PC-3 (cell line): ENCODE measurements at regions of chr3 and their contacts with region 1.

Region 1: DNA sequence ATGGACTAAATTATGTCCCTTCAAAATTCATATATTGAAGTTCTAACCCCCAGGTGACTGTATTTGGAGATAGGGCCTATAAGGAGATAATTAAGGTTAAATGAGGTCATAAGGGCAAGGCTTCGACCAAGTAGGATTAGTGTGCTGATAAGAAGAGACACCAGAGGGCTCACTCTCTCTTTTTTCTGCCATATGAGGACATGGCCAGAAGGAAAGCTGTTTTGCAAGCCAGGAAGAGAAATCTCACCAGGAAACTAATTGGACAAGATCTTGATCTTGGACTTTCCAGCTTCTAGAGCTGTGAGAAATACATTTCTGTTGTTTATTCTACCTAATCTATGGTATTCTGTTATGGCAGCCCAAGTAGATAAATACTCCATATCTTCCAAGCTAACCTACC is 503.6 kb upstream of the NAALADL2 start:
- DNase-seq: peak; percentile 48
- ATAC-seq: peak; percentile 81
- H3K4me3 ChIP-seq: no peak overlapping the region
- H3K27ac ChIP-seq: no peak overlapping the region
- H3K4me1 ChIP-seq: no peaks in the 10 kb centered on the region
- H3K27me3 ChIP-seq: no peaks in the 10 kb centered on the region
- CTCF ChIP-seq: peak; percentile 65

Region 2: DNA sequence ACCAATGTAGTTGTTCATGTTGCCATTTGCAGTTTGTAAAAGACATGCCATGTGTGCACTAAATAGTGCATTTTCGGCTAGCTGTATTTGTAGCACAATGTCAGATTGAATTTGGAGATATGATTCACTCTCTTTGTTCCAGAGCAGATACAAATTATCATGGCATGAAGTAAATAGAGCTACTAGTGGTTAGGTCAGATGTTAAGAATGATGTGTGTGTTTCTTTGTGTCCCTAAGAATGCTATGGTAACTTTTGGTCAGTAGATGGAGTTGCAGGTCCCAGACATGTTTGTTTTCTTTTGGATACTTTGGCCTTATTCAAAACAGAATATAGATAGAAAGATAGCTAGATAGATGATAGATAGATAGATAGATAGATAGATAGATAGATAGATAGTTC is 362.2 kb before region 1 on chr3:
- CTCF ChIA-PET with region 1: no interaction called
- POLR2A ChIA-PET with region 1: no interaction called
- intact Hi-C with region 1: loop called (anchors 10 kb)
- DNase-seq: peak; percentile 45
- ATAC-seq: peak; percentile 85
- H3K4me3 ChIP-seq: no peak overlapping the region
- H3K27ac ChIP-seq: no peak overlapping the region
- H3K4me1 ChIP-seq: no peaks in the 10 kb centered on the region
- H3K27me3 ChIP-seq: no peaks in the 10 kb centered on the region
- CTCF ChIP-seq: peak; percentile 67

Region 3: GRCh38 chr3:174614036-174614435 is 258.5 kb after region 1 on chr3:
- CTCF ChIA-PET with region 1: no interaction called
- POLR2A ChIA-PET with region 1: no interaction called
- intact Hi-C with region 1: loop called (anchors 10 kb)
- DNase-seq: no peak
- ATAC-seq: no peak
- H3K4me3 ChIP-seq: no peak overlapping the region
- H3K27ac ChIP-seq: no peak overlapping the region
- H3K4me1 ChIP-seq: no peaks in the 10 kb centered on the region
- H3K27me3 ChIP-seq: no peaks in the 10 kb centered on the region
- CTCF ChIP-seq: no peak